ENCODE measurements at regions of chr10 and their contacts with region 1.

Region 1: DNA sequence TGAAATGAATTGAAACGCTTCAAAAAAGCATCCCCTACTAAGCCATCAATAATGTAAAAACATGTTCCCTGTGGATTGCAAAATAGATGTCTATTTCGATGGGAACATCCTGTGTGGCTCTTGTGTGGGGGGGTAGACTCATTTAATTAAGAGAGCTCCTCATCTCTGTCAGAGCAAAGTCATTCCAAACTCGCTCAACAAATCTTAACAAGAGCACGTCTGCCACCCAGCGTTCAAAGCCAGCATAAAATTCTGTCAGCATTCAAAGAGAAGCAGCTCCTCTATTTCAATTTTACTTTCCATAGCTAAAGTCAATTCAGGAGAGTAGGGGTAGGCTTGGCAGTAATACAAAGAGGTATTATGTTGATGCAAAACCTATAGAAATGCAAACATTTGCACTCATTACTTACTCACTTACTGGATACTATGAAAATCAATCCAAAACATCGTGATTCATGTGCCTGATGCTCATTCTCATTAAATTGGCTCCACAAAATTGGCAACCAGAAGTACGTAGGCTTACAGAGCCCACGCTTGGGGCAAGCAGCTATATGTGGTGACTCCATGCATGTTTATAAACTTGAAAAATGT is 114.9 kb downstream of the IPMK start:
- DNase-seq: peak; percentile 45
- ATAC-seq: no peak

Region 2: GRCh38 chr10:57341294-57341693 is 811.5 kb before region 1 on chr10:
- intact Hi-C with region 1: loop called (anchors 10 kb)
- DNase-seq: peak; percentile 20
- ATAC-seq: no peak

Region 3: DNA sequence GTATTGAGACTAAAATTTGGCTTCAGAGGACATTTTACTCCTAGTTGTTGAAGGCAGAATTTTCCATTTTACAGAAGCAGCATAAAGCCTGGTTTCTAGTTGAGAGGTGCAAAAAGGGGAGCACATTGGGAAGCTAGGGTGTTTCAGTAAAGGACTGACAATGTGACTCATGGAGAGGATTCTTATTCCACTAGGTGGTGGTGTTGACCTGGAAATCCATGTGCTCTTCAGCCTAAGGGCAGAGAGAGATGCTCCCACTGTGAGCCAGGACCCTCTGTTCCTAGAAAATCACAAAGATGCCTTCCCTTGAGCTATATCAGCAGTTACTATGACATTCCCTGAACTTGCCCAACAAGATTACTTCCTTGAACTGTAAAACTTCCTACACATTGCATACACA is 572.8 kb before region 1 on chr10:
- intact Hi-C with region 1: loop called (anchors 5 kb)
- DNase-seq: no peak
- ATAC-seq: peak; percentile 62

Region 4: DNA sequence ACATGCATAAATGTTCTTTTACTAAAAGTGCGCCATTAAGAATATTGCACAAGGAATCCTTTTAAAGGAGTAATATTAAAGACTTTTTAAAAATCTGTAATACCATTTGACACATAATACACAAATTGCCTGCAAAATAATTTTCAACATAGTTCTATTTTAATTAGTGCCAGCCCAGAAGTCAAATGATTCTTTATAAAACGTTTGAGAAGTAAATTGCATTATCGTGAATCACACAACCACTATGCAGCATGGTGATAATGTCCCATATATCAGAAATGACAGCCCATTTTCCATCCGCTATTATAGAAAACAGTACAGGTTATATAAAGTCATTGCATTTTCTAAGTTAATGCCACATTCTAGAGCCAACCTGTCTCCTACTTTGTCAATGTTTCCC is 209.1 kb before region 1 on chr10:
- intact Hi-C with region 1: no loop called
- DNase-seq: no peak
- ATAC-seq: no peak